Spleen (tissue), 13 donors: ENCODE measurements at regions of chr9 and their contacts with region 1.

Region 1: GRCh38 chr9:70484210-70485130 is 70.0 kb upstream of the KLF9 start:
- DNase-seq: no peak
- H3K4me3 ChIP-seq: no peak overlapping the region
- H3K27ac ChIP-seq: peak overlapping the region in 4 of 8 donors; percentile 26 to 82 (median 50)
- H3K4me1 ChIP-seq: peaks cover 5 to 43% (median 20%) of the 10 kb centered on the region in 6 donors
- H3K27me3 ChIP-seq: no peaks in the 10 kb centered on the region
- CTCF ChIP-seq: peak; percentile 58 to 85 (median 81)
- POLR2A ChIP-seq: no peak

Region 2: GRCh38 chr9:70340572-70340971 is 143.9 kb before region 1 on chr9:
- intact Hi-C with region 1: loop called (anchors 10 kb)
- DNase-seq: no peak
- H3K4me3 ChIP-seq: no peak overlapping the region
- H3K27ac ChIP-seq: no peak overlapping the region
- H3K4me1 ChIP-seq: peaks cover 0 to 10% (median 0%) of the 10 kb centered on the region in 6 donors
- H3K27me3 ChIP-seq: no peaks in the 10 kb centered on the region
- CTCF ChIP-seq: peak in 10 of 11 experiments; percentile 20 to 66 (median 51)
- POLR2A ChIP-seq: no peak

Region 3: DNA sequence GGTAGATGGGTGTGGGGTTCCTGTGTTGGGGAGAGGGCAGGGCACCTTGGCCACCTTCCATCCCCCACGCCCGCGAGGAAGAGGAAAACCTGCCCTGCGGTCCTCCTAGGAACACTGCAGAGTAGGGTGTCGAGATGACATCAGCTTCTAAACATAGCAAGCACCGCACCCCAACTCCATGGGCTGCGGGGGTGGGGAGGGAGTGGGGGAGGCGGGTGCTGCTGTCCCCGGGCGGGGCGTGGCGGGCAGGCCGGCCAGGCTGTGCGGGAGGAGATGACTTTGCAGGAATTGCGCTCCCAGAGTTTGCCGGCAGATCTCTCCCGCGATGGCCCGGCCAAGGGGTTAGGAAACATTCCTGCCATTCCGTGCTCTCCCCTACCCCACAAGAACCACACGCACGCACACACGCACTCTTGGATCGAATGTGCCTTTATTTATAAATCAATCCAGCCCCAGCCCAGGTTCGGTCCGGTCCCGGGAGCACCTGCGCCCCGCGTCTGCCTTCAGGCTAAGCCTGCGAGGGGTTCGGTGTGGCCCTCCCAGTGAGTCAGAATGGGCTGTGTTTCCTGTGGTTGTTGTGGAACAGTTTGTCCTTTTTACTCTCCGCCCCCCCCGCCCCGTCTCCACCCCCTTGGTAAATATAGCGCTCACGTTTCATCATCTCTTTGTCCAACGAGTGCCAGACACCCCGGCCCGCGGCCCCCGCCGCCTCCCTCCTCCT is 64.8 kb before region 1 on chr9:
- intact Hi-C with region 1: loop called (anchors 10 kb)
- DNase-seq: peak; percentile 99
- H3K4me3 ChIP-seq: peak overlapping the region; percentile 14 to 75 (median 43)
- H3K27ac ChIP-seq: peak overlapping the region; percentile 94 to 100 (median 98)
- H3K4me1 ChIP-seq: peaks cover 24 to 65% (median 42%) of the 10 kb centered on the region in 6 donors
- H3K27me3 ChIP-seq: no peaks in the 10 kb centered on the region
- CTCF ChIP-seq: peak in 3 of 11 experiments; percentile 4 to 26 (median 8)
- POLR2A ChIP-seq: peak; percentile 86 to 96 (median 89)

Region 4: DNA sequence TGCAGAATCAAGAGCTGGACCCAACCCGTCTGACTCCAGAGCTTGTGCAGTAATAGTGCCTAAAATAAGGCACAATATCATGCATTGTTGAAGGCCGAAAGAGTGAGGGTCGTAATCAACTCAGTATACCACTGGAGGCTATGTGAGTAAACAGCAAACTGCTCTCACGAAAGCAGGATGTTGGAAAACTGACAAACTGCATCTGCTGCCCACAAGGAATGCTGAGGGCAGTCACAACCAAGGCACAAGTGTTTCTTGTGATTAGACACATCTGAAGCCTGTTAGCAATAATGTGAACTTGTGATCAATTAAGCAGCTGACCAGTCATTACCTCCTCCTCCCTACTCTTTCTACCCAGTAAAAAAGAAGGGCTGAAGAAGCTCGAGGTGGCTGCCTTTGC is 588.1 kb after region 1 on chr9:
- intact Hi-C with region 1: no loop called
- DNase-seq: no peak
- H3K4me3 ChIP-seq: no peak overlapping the region
- H3K27ac ChIP-seq: no peak overlapping the region
- H3K4me1 ChIP-seq: no peaks in the 10 kb centered on the region
- H3K27me3 ChIP-seq: no peaks in the 10 kb centered on the region
- CTCF ChIP-seq: no peak
- POLR2A ChIP-seq: no peak